Panc1 (cell line): ENCODE measurements at regions of chr7 and their contacts with region 1.

Region 1: DNA sequence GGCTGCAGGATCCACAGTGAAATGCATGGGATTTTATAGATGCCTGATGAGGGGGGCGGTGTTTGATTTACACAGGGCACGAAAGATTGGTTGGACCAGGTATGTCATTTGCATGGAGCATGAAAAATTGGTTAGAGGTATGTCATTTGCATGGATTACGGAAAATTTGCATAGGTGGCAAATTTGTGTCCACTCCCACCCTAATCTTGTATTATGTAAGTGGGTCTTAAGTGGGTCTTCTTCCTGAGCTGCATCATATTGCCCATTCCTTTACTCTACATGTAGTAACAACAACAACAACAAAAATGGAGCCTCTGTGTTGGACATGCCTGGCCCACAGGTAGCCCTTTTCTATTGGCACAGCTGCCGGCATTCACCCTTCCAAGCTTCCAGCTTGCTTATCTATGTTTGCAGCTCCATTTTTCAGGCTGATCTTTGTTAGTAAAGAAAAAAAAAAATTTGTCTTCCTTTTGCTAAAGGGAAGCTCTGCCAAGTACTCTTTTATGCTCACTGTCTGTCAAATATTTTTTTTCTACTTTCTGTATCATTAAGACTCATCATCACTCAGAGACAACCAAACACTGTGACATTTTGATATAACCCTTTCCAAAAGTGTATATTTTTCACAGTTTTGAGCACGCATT is 10.3 kb upstream of the ZNF273 start:
- DNase-seq: no peak
- ATAC-seq: no peak
- H3K4me3 ChIP-seq: no peak overlapping the region
- H3K27ac ChIP-seq: no peak overlapping the region
- H3K4me1 ChIP-seq: peaks cover 9% of the 10 kb centered on the region; the same call in 1 of the 2 replicates
- H3K27me3 ChIP-seq: peaks cover 2% of the 10 kb centered on the region; the same call in 1 of the 2 replicates
- CTCF ChIP-seq: no peak

Region 2: GRCh38 chr7:64907641-64908326 is 15.0 kb after region 1 on chr7:
- CTCF ChIA-PET with region 1: interaction called, 10 read pairs
- POLR2A ChIA-PET with region 1: interaction called, 4 read pairs
- in situ Hi-C with region 1: no loop called
- intact Hi-C with region 1: no loop called
- DNase-seq: no peak
- ATAC-seq: 0 out of 2 replicates have a peak, but pooled peaks have one; percentile 3
- H3K4me3 ChIP-seq: no peak overlapping the region
- H3K27ac ChIP-seq: no peak overlapping the region
- H3K4me1 ChIP-seq: peaks cover 34% of the 10 kb centered on the region
- H3K27me3 ChIP-seq: no peaks in the 10 kb centered on the region
- CTCF ChIP-seq: no peak

Region 3: GRCh38 chr7:64978497-64979203 is 85.9 kb after region 1 on chr7:
- CTCF ChIA-PET with region 1: no interaction called
- POLR2A ChIA-PET with region 1: no interaction called
- in situ Hi-C with region 1: no loop called
- intact Hi-C with region 1: no loop called
- DNase-seq: no peak
- ATAC-seq: no peak
- H3K4me3 ChIP-seq: no peak overlapping the region
- H3K27ac ChIP-seq: no peak overlapping the region
- H3K4me1 ChIP-seq: no peaks in the 10 kb centered on the region
- H3K27me3 ChIP-seq: no peaks in the 10 kb centered on the region
- CTCF ChIP-seq: no peak